Endothelial cell of umbilical vein (primary cell): ENCODE measurements at regions of chr20 and their contacts with region 1.

Region 1: GRCh38 chr20:47356526-47357295 is at the start of gene ZMYND8:
- DNase-seq: peak; percentile 98
- H3K4me3 ChIP-seq: peak within 1 kb of the TSS; percentile 16 to 82 (median 35)
- H3K27ac ChIP-seq: peak within 1 kb of the TSS; percentile 97
- H3K4me1 ChIP-seq: peaks cover 94% of the 10 kb centered on the region
- H3K27me3 ChIP-seq: no peaks in the 10 kb centered on the region
- CTCF ChIP-seq: no peak
- POLR2A ChIP-seq: peak; percentile 9
- total RNA-seq, gene ZMYND8: 75.2 and 76.3 TPM in 2 replicates

Region 2: GRCh38 chr20:47334022-47334551 is 22.6 kb before region 1 on chr20:
- CTCF ChIA-PET with region 1: interaction called, 12 read pairs
- POLR2A ChIA-PET with region 1: interaction called, 11 read pairs
- dilution Hi-C with region 1: no loop called
- intact Hi-C with region 1: loop called (anchors 1 kb)
- DNase-seq: peak; percentile 96
- H3K4me3 ChIP-seq: peak overlapping the region in 1 of 3 experiments; percentile 58
- H3K27ac ChIP-seq: peak overlapping the region; percentile 56
- H3K4me1 ChIP-seq: peaks cover 56% of the 10 kb centered on the region
- H3K27me3 ChIP-seq: no peaks in the 10 kb centered on the region
- CTCF ChIP-seq: no peak
- POLR2A ChIP-seq: peak; percentile 87

Region 3: DNA sequence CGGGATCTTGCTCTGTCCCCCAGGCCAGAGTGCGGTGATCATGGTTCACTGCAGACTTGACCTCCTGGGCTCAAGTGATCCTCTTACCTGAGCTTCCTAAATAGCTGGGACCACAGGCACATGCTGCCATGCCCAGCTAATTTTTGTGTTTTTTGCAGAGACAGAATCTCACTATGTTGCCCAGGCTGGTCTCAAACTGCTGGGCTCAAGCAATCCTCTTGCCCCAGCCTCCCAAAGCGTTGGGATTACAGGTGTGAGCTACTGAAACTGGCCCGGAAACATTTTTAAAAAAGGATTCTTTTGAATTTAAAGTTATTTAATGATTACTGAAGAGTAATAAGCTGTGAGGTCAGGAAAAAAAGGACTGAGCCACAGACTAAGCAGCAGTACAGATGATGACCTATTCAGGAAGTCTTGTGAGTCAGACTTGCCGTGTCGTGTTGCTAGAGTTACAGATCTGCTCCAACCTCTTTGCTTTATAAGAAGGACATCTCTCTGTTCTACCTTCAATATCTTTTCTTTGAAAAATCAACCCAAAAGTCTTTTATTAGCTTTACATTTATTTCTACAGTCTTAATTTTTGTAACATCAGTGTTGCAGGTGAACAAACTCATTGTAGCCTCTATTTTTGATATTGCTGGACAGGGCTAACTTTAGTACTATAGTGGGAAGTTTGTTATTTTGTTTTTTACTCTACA is 253.7 kb after region 1 on chr20:
- CTCF ChIA-PET with region 1: no interaction called
- POLR2A ChIA-PET with region 1: no interaction called
- dilution Hi-C with region 1: no loop called
- intact Hi-C with region 1: no loop called
- DNase-seq: peak; percentile 93
- H3K4me3 ChIP-seq: no peak overlapping the region
- H3K27ac ChIP-seq: peak overlapping the region; percentile 95
- H3K4me1 ChIP-seq: peaks cover 37% of the 10 kb centered on the region
- H3K27me3 ChIP-seq: no peaks in the 10 kb centered on the region
- CTCF ChIP-seq: no peak
- POLR2A ChIP-seq: no peak

Region 4: GRCh38 chr20:48283305-48284080 is 926.8 kb after region 1 on chr20:
- CTCF ChIA-PET with region 1: no interaction called
- POLR2A ChIA-PET with region 1: no interaction called
- dilution Hi-C with region 1: no loop called
- intact Hi-C with region 1: loop called (anchors 5 kb)
- DNase-seq: peak; percentile 99
- H3K4me3 ChIP-seq: no peak overlapping the region
- H3K27ac ChIP-seq: peak overlapping the region; percentile 68
- H3K4me1 ChIP-seq: peaks cover 55% of the 10 kb centered on the region
- H3K27me3 ChIP-seq: no peaks in the 10 kb centered on the region
- CTCF ChIP-seq: no peak
- POLR2A ChIP-seq: no peak